T-cell (primary cell): ENCODE measurements at regions of chr3 and their contacts with region 1.

Region 1: GRCh38 chr3:104536715-104537114 is 830.0 kb upstream of the ALCAM start:
- DNase-seq: no peak
- ATAC-seq: no peak
- H3K4me3 ChIP-seq: no peak overlapping the region
- H3K4me3 Mint-ChIP-seq: no peak overlapping the region
- H3K27ac ChIP-seq: no peak overlapping the region
- H3K27ac Mint-ChIP-seq: no peak overlapping the region
- H3K4me1 ChIP-seq: no peaks in the 10 kb centered on the region
- H3K4me1 Mint-ChIP-seq: no peaks in the 10 kb centered on the region
- H3K27me3 ChIP-seq: no peaks in the 10 kb centered on the region
- H3K27me3 Mint-ChIP-seq: no peaks in the 10 kb centered on the region

Region 2: DNA sequence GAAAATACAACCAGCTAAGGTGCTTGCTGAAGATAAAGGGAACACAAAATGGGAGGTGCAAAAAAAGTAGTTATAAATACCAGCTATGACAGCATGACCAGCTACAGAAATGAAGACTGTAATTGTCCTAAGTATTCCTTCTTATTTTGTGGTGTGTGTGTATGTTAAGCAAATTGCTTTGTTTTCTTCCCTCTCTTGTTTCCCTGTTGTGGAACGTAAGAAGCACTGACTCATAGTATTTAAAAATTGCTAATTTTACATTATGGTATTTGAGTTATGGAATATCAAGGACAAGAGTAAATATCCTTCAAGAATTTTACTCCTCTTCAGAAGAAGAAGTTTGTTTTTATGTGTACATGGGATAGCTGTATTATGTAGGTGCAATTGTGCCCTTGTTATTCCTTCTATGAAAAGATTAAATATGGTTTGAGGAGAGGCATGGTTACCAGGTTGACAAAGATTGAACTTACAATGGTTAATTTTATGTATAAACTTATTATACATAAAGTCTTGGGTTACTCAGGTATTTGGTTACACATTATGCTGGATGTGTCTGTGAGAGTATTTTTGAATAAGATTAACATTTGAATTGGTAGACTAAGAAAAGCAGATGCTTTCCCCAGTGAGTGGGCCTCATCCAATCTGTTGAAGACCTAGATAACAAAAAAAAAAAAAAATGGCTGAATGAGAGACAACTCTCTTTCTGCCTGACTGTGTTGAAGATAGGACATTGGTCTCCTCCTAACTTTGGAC is 302.1 kb before region 1 on chr3:
- CTCF ChIA-PET with region 1: no interaction called
- POLR2A ChIA-PET with region 1: no interaction called
- DNase-seq: no peak
- ATAC-seq: no peak
- H3K4me3 ChIP-seq: no peak overlapping the region
- H3K4me3 Mint-ChIP-seq: no peak overlapping the region
- H3K27ac ChIP-seq: no peak overlapping the region
- H3K27ac Mint-ChIP-seq: no peak overlapping the region
- H3K4me1 ChIP-seq: no peaks in the 10 kb centered on the region
- H3K4me1 Mint-ChIP-seq: no peaks in the 10 kb centered on the region
- H3K27me3 ChIP-seq: no peaks in the 10 kb centered on the region
- H3K27me3 Mint-ChIP-seq: no peaks in the 10 kb centered on the region

Region 3: DNA sequence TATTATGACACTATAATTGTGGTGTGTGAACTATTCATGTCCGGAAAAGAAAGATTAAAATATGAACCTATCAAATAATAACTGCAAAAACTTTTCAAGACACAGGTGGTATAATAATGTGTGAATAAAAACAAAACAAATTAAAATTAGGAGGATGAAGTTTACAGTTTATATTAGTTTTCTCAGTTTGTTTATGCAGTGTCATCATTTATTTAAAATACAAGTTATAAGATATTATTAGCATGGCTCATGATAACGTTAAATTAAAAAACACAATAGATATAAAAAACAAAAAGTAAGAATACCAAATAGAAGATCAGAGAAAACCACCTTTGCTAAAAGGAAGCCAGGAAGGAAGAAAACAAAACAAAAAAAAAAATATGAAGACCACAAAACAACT is 133.8 kb before region 1 on chr3:
- CTCF ChIA-PET with region 1: no interaction called
- POLR2A ChIA-PET with region 1: no interaction called
- DNase-seq: no peak
- ATAC-seq: no peak
- H3K4me3 ChIP-seq: no peak overlapping the region
- H3K4me3 Mint-ChIP-seq: no peak overlapping the region
- H3K27ac ChIP-seq: no peak overlapping the region
- H3K27ac Mint-ChIP-seq: no peak overlapping the region
- H3K4me1 ChIP-seq: no peaks in the 10 kb centered on the region
- H3K4me1 Mint-ChIP-seq: no peaks in the 10 kb centered on the region
- H3K27me3 ChIP-seq: no peaks in the 10 kb centered on the region
- H3K27me3 Mint-ChIP-seq: no peaks in the 10 kb centered on the region

Region 4: GRCh38 chr3:104547031-104547430 is 10.3 kb after region 1 on chr3:
- CTCF ChIA-PET with region 1: no interaction called
- POLR2A ChIA-PET with region 1: no interaction called
- DNase-seq: no peak
- ATAC-seq: no peak
- H3K4me3 ChIP-seq: no peak overlapping the region
- H3K4me3 Mint-ChIP-seq: no peak overlapping the region
- H3K27ac ChIP-seq: no peak overlapping the region
- H3K27ac Mint-ChIP-seq: no peak overlapping the region
- H3K4me1 ChIP-seq: no peaks in the 10 kb centered on the region
- H3K4me1 Mint-ChIP-seq: no peaks in the 10 kb centered on the region
- H3K27me3 ChIP-seq: no peaks in the 10 kb centered on the region
- H3K27me3 Mint-ChIP-seq: peaks cover 0 to 2% of the 10 kb centered on the region in 2 donors

Region 5: GRCh38 chr3:105353485-105354161 is 816.9 kb after region 1 on chr3:
- CTCF ChIA-PET with region 1: interaction called in 1 of 2 experiments, 11 read pairs
- POLR2A ChIA-PET with region 1: no interaction called
- DNase-seq: no peak
- ATAC-seq: no peak
- H3K4me3 ChIP-seq: no peak overlapping the region
- H3K4me3 Mint-ChIP-seq: peak overlapping the region in 2 of 3 donors; percentile 23 to 41
- H3K27ac ChIP-seq: no peak overlapping the region
- H3K27ac Mint-ChIP-seq: no peak overlapping the region
- H3K4me1 ChIP-seq: peaks cover 0 to 8% of the 10 kb centered on the region in 2 experiments
- H3K4me1 Mint-ChIP-seq: peaks cover 8 to 19% (median 9%) of the 10 kb centered on the region in 3 donors
- H3K27me3 ChIP-seq: peaks cover 2 to 9% of the 10 kb centered on the region in 2 experiments
- H3K27me3 Mint-ChIP-seq: peaks cover 40 to 53% of the 10 kb centered on the region in 2 donors